ENCODE measurements at regions of chr19 and their contacts with region 1.

Region 1: DNA sequence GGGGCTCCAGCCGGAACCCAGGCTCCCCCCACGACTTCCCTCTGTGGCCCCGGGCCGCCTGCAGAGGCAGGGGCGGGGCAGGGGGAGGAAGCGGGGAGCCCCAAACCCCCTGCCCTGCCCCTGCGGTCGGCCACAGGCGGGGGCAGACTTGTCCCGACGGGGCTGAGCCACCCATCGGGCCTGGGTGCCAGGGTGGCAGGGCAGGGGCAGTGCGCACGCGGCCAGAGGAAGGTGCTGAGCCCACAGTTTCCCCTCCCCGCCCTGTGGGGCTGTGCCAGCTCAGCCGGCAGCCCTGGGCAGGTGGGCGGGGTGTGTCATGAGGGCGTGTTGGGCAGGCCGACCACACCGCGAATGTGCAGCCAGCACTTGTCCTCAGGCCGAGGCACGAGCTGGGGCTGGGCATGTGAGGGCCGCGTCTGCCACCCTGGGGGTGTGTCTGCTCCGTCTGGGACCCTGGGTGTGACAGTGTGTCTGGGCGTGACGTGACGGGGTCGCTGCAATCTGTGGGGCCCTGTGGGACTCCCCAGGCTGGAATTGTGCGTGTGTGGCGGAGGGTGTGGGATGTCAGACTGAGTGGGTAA is 17.7 kb downstream of the CCDC97 start:
- DNase-seq: peak; percentile 81 to 99 (median 84)
- H3K4me3 ChIP-seq: peak overlapping the region in 1 of 2 donors; percentile 43
- H3K4me3 Mint-ChIP-seq: peak overlapping the region; percentile 77 to 87 (median 84)
- H3K27ac ChIP-seq: peak overlapping the region; percentile 76
- H3K27ac Mint-ChIP-seq: peak overlapping the region; percentile 97 to 99 (median 98)
- H3K4me1 ChIP-seq: peaks cover 69% of the 10 kb centered on the region
- H3K4me1 Mint-ChIP-seq: peaks cover 45 to 81% (median 62%) of the 10 kb centered on the region in 4 donors
- H3K27me3 ChIP-seq: no peaks in the 10 kb centered on the region
- H3K27me3 Mint-ChIP-seq: no peaks in the 10 kb centered on the region

Region 2: DNA sequence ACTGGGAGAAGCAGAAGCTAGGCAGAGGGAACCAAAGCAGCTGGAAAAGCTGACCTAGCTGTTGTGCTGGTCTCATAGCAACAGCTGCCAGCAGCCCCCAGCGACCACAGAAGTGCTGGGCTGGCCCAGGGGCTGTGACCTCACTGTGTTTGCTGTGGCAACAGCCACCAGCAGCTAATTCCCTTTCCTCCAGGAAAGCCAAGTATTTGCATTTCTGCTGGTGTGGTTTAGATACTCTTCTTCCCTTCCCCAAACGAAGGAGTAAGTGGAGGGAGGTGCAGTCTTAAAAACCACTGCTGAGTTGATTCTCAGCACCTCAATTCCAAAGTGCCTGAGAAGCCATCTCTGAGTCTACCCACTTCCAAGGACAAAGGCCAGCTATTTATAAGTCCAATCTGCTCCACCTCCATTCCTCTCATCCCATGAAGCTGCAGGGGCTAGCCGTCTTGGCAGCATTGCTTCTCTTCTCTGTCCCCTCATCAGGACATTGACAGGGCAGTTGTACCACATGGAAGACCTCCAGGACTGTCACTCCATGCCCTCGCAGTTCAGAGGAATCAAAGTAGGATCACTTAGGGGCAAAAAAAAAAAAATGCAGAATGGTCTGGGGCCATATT is 29.2 kb before region 1 on chr19:
- CTCF ChIA-PET with region 1: no interaction called
- POLR2A ChIA-PET with region 1: interaction called, 29 read pairs
- intact Hi-C with region 1: no loop called
- DNase-seq: peak; percentile 47 to 80 (median 56)
- H3K4me3 ChIP-seq: no peak overlapping the region
- H3K4me3 Mint-ChIP-seq: peak overlapping the region in 7 of 8 donors; percentile 59 to 85 (median 70)
- H3K27ac ChIP-seq: peak overlapping the region; percentile 76
- H3K27ac Mint-ChIP-seq: peak overlapping the region; percentile 95 to 100 (median 99)
- H3K4me1 ChIP-seq: peaks cover 85% of the 10 kb centered on the region
- H3K4me1 Mint-ChIP-seq: peaks cover 72 to 92% (median 82%) of the 10 kb centered on the region in 4 donors
- H3K27me3 ChIP-seq: no peaks in the 10 kb centered on the region
- H3K27me3 Mint-ChIP-seq: no peaks in the 10 kb centered on the region

Region 3: GRCh38 chr19:41341669-41342490 is 14.2 kb after region 1 on chr19:
- CTCF ChIA-PET with region 1: interaction called, 4 read pairs
- POLR2A ChIA-PET with region 1: interaction called, 73 read pairs
- intact Hi-C with region 1: no loop called
- DNase-seq: no peak
- H3K4me3 ChIP-seq: no peak overlapping the region
- H3K4me3 Mint-ChIP-seq: peak overlapping the region; percentile 36 to 79 (median 62)
- H3K27ac ChIP-seq: peak overlapping the region; percentile 7
- H3K27ac Mint-ChIP-seq: peak overlapping the region; percentile 48 to 84 (median 59)
- H3K4me1 ChIP-seq: peaks cover 50% of the 10 kb centered on the region
- H3K4me1 Mint-ChIP-seq: peaks cover 29 to 73% (median 47%) of the 10 kb centered on the region in 4 donors
- H3K27me3 ChIP-seq: no peaks in the 10 kb centered on the region
- H3K27me3 Mint-ChIP-seq: no peaks in the 10 kb centered on the region

Measured in CD4-positive, alpha-beta memory T cell (primary cell).